ENCODE measurements at regions of chr17 and their contacts with region 1.

Region 1: GRCh38 chr17:29722411-29723198 is 99.9 kb upstream of the CORO6 start:
- DNase-seq: no peak
- ATAC-seq: peak; percentile 85
- H3K4me3 Mint-ChIP-seq: peak overlapping the region; percentile 60
- H3K27ac Mint-ChIP-seq: peak overlapping the region; percentile 89
- H3K4me1 Mint-ChIP-seq: peaks cover 92% of the 10 kb centered on the region
- H3K27me3 Mint-ChIP-seq: no peaks in the 10 kb centered on the region
- CTCF ChIP-seq: no peak

Region 2: GRCh38 chr17:29347831-29348629 is 374.6 kb before region 1 on chr17:
- CTCF ChIA-PET with region 1: no interaction called
- POLR2A ChIA-PET with region 1: no interaction called
- intact Hi-C with region 1: no loop called
- DNase-seq: no peak
- ATAC-seq: no peak
- H3K4me3 Mint-ChIP-seq: no peak overlapping the region
- H3K27ac Mint-ChIP-seq: no peak overlapping the region
- H3K4me1 Mint-ChIP-seq: no peaks in the 10 kb centered on the region
- H3K27me3 Mint-ChIP-seq: peaks cover 3% of the 10 kb centered on the region
- CTCF ChIP-seq: no peak

Region 3: DNA sequence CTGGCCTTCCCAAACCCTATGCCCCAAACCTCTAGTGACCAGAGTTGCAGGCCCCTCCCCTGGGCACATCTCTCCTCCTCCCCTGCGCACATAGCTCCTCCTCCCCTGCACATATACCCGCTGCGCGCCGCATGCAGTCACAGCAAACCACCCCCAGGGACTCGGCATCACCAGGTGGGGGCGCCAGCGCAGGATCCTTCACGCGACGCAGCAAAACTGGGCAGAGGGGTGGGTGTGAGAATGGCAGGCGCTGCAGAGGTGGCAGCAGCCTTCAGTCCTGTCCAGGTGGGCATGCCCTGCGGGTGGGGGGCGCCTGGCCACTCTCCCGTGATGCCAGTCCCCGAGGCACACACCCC is 105.5 kb before region 1 on chr17:
- CTCF ChIA-PET with region 1: interaction called, 12 read pairs
- POLR2A ChIA-PET with region 1: interaction called, 11 read pairs
- intact Hi-C with region 1: no loop called
- DNase-seq: peak; percentile 75
- ATAC-seq: peak; percentile 79
- H3K4me3 Mint-ChIP-seq: peak overlapping the region; percentile 83
- H3K27ac Mint-ChIP-seq: peak overlapping the region; percentile 72
- H3K4me1 Mint-ChIP-seq: peaks cover 46% of the 10 kb centered on the region
- H3K27me3 Mint-ChIP-seq: peaks cover 3% of the 10 kb centered on the region
- CTCF ChIP-seq: no peak

Region 4: DNA sequence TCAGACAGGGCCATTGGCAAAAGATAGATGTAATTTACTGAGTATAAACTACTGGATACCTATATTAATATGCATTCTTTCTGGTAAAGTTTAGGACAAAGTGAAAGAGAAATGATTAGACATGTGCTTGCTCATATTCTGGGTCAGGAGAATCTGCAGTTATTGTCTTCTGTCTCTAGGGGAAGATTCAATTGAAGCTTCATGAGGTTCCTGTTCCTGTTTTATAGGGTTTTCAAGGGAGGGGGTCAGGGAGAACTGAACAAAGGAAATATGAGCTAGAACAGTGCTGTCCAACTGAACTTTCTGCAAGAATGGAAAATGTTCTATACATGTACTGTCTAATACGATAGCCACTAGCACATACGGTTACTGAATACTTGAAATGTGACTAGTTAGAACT is 40.6 kb before region 1 on chr17:
- CTCF ChIA-PET with region 1: interaction called, 10 read pairs
- POLR2A ChIA-PET with region 1: interaction called, 29 read pairs
- intact Hi-C with region 1: loop called (anchors 1 kb)
- DNase-seq: no peak
- ATAC-seq: peak; percentile 93
- H3K4me3 Mint-ChIP-seq: peak overlapping the region; percentile 21
- H3K27ac Mint-ChIP-seq: peak overlapping the region; percentile 81
- H3K4me1 Mint-ChIP-seq: peaks cover 27% of the 10 kb centered on the region
- H3K27me3 Mint-ChIP-seq: no peaks in the 10 kb centered on the region
- CTCF ChIP-seq: no peak

Region 5: GRCh38 chr17:29710891-29711418 is 11.7 kb before region 1 on chr17:
- CTCF ChIA-PET with region 1: interaction called, 7 read pairs
- POLR2A ChIA-PET with region 1: interaction called, 115 read pairs
- intact Hi-C with region 1: loop called (anchors 1 kb)
- DNase-seq: no peak
- ATAC-seq: no peak
- H3K4me3 Mint-ChIP-seq: no peak overlapping the region
- H3K27ac Mint-ChIP-seq: peak overlapping the region; percentile 72
- H3K4me1 Mint-ChIP-seq: peaks cover 93% of the 10 kb centered on the region
- H3K27me3 Mint-ChIP-seq: no peaks in the 10 kb centered on the region
- CTCF ChIP-seq: no peak

Region 6: DNA sequence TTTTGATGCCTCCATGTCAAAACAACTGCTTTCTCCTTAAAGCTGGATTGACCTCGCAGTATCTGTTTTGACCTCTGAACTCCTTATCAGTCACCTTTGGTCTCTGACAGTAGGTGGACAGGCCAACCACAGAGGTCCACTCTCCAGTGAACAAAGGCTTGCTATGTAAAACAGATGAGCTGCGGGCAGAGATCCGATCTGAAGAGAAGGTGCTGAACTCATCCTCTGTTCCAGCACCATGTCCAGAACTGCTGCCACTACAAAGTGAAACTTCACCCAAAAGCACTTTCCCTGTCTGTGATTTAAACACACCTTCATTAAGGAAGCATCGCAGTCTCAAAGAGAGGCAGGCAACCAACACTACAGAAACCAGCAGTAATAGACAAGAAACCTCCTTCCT is 17.4 kb after region 1 on chr17:
- CTCF ChIA-PET with region 1: no interaction called
- POLR2A ChIA-PET with region 1: interaction called, 16 read pairs
- intact Hi-C with region 1: loop called (anchors 2 kb)
- DNase-seq: no peak
- ATAC-seq: no peak
- H3K4me3 Mint-ChIP-seq: no peak overlapping the region
- H3K27ac Mint-ChIP-seq: peak overlapping the region; percentile 74
- H3K4me1 Mint-ChIP-seq: peaks cover 58% of the 10 kb centered on the region
- H3K27me3 Mint-ChIP-seq: no peaks in the 10 kb centered on the region
- CTCF ChIP-seq: no peak

Region 7: DNA sequence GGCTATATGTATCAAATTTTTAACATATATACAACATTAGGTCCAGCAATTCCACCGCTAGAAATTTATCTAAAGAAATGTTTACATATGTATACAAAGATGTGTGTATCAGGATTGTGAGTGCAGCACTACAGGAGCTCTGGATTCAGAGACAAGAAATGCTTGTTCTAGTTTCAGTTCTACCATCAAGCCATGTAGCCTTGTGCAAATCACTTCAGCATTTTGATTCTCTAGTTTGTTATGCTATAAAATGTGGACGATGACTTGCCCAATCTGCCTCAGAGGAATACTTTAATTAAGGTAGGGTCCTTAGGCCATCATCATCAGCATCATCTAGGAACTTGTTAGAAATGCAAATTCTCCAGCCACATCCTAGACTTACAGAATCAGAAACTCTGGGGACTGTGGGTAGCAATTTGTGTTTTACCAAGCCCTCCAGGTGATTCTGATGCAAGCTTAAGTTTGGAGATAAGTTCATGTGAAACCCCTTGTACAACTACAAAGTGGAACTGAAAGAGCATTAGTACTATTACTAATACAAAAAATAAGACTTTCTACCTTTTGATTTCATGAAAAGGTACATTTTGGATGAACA is 31.3 kb after region 1 on chr17:
- CTCF ChIA-PET with region 1: interaction called, 3 read pairs
- POLR2A ChIA-PET with region 1: interaction called, 29 read pairs
- intact Hi-C with region 1: no loop called
- DNase-seq: no peak
- ATAC-seq: peak; percentile 80
- H3K4me3 Mint-ChIP-seq: peak overlapping the region; percentile 5
- H3K27ac Mint-ChIP-seq: peak overlapping the region; percentile 77
- H3K4me1 Mint-ChIP-seq: peaks cover 58% of the 10 kb centered on the region
- H3K27me3 Mint-ChIP-seq: no peaks in the 10 kb centered on the region
- CTCF ChIP-seq: no peak